Mammary epithelial cell (primary cell): ENCODE measurements at regions of chr2 and their contacts with region 1.

Region 1: GRCh38 chr2:160207804-160208661 is 8.0 kb upstream of the ITGB6 start:
- DNase-seq: peak; percentile 98
- H3K4me3 ChIP-seq: no peak overlapping the region
- H3K27ac ChIP-seq: peak overlapping the region; percentile 97
- H3K4me1 ChIP-seq: peaks cover 74% of the 10 kb centered on the region
- H3K27me3 ChIP-seq: no peaks in the 10 kb centered on the region
- CTCF ChIP-seq: no peak

Region 2: DNA sequence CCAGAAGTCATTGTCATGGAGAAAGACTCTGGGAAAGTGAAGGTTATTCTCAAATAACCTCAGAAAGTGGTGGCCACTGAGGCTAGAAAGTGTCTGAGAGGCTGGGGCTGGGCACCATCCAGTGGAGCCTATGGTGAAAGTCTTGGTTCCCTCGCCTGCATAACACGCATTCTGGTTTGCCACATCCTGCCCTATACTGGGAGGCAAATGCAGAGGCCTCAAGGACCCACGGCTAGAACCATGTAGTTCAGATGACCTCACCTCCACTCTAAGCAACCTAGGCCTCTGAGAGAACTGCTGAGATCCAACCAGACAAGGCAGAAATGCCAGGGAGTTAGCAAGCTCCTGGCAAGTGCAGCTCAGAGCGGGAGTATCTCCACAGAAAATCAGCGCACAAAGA is 13.1 kb before region 1 on chr2:
- CTCF ChIA-PET with region 1: no interaction called
- dilution Hi-C with region 1: no loop called
- in situ Hi-C with region 1: no loop called
- intact Hi-C with region 1: loop called (anchors 1 kb)
- DNase-seq: no peak
- H3K4me3 ChIP-seq: no peak overlapping the region
- H3K27ac ChIP-seq: peak overlapping the region; percentile 43
- H3K4me1 ChIP-seq: peaks cover 38% of the 10 kb centered on the region
- H3K27me3 ChIP-seq: no peaks in the 10 kb centered on the region
- CTCF ChIP-seq: peak in 1 of 2 donors; percentile 1